ENCODE measurements at regions of chr4 and their contacts with region 1.

Region 1: GRCh38 chr4:37802068-37802666 is 24.3 kb upstream of the PGM2 start:
- DNase-seq: peak in 1 of 14 experiments; percentile 11
- ATAC-seq: no peak
- H3K4me3 ChIP-seq: no peak overlapping the region
- H3K4me3 Mint-ChIP-seq: no peak overlapping the region
- H3K27ac ChIP-seq: no peak overlapping the region
- H3K27ac Mint-ChIP-seq: no peak overlapping the region
- H3K4me1 ChIP-seq: no peaks in the 10 kb centered on the region
- H3K4me1 Mint-ChIP-seq: no peaks in the 10 kb centered on the region
- H3K27me3 ChIP-seq: no peaks in the 10 kb centered on the region
- H3K27me3 Mint-ChIP-seq: no peaks in the 10 kb centered on the region
- CTCF ChIP-seq: no peak

Region 2: DNA sequence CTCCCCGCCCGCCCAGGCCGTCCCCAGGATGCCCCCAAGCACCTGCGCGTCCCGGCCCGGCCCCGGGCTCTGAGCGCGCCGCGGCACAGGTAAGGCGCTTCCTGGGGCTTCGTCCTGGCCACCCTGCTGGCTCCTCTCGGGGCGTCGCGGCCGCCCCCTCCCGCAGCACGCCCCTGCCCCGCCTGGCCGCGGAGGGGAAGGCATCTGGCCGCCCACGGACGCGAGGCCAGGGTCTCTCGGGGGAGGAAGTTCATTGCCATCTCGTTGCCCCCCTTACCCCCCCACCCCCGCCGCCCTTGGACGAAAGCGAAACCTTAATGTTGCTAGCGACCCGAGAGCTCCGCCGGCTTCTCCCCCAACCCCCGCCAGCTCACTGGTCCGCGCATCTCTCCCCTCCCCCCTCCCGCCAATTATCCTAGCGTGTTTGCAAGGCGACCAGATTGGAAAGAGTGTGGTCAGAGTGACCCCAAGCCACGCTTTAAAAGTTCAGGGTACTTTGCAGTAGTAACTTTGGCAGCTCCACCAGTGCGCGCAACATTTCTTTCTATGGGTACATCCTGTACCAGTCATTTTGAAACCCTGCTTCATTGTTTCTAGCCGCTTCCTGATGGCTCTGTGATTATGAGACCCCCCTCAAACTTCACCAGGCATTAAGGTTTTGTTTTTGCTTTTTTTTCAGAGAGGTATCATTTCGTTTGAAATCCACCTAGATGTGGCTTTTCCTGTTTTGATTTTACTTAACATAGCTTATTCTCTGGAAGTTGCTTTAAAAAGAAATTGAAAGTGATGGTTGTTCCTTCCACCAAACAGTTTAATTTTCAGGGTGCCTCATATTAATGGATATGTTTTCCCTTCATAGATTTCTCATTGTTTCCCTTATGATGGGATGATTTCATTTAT is 89.3 kb after region 1 on chr4:
- CTCF ChIA-PET with region 1: no interaction called
- POLR2A ChIA-PET with region 1: no interaction called
- intact Hi-C with region 1: loop called in 1 of 2 experiments (anchors 5 kb)
- DNase-seq: peak in 13 of 14 experiments; percentile 13 to 76 (median 41)
- ATAC-seq: peak; percentile 63
- H3K4me3 ChIP-seq: peak overlapping the region; percentile 59
- H3K4me3 Mint-ChIP-seq: peak overlapping the region; percentile 97
- H3K27ac ChIP-seq: peak overlapping the region; percentile 20 to 66
- H3K27ac Mint-ChIP-seq: peak overlapping the region; percentile 94
- H3K4me1 ChIP-seq: peaks cover 40% of the 10 kb centered on the region
- H3K4me1 Mint-ChIP-seq: peaks cover 48% of the 10 kb centered on the region
- H3K27me3 ChIP-seq: no peaks in the 10 kb centered on the region
- H3K27me3 Mint-ChIP-seq: no peaks in the 10 kb centered on the region
- CTCF ChIP-seq: no peak

Region 3: DNA sequence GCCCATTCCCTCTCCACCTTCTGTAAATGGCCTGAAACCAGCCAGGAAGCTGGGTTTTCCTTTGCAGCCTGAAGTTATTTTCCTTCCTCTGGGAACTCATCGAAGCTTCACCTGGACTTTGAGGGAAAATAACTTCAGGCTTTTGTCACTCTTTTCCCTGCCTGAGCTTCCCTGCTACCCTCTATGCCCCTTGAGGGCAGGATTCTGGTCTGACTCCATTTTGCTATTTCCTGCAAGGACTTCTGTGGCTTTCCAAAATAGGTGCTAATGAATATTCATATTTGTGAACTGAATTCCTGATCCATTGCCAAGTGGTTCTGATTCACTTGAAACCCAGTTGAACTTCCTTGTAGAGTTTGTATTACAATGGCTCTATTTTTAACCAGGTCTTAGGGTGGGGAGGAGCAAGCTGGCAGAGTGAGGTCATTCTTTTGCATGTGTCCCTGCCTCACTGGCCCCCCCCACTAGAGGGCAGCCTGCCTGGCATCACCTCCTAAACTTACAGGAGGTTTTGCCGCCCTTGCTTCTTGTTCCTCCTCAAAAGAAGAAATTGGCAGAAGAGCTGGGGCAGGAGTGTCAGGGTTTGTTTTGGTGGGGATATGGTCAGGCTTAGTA is 168.4 kb after region 1 on chr4:
- CTCF ChIA-PET with region 1: no interaction called
- POLR2A ChIA-PET with region 1: no interaction called
- intact Hi-C with region 1: loop called in 1 of 2 experiments (anchors 2 kb)
- DNase-seq: peak in 13 of 14 experiments; percentile 19 to 79 (median 44)
- ATAC-seq: peak; percentile 91
- H3K4me3 ChIP-seq: no peak overlapping the region
- H3K4me3 Mint-ChIP-seq: no peak overlapping the region
- H3K27ac ChIP-seq: no peak overlapping the region
- H3K27ac Mint-ChIP-seq: no peak overlapping the region
- H3K4me1 ChIP-seq: no peaks in the 10 kb centered on the region
- H3K4me1 Mint-ChIP-seq: peaks cover 23% of the 10 kb centered on the region
- H3K27me3 ChIP-seq: no peaks in the 10 kb centered on the region
- H3K27me3 Mint-ChIP-seq: no peaks in the 10 kb centered on the region
- CTCF ChIP-seq: no peak

Region 4: GRCh38 chr4:38034986-38035882 is 233.1 kb after region 1 on chr4:
- CTCF ChIA-PET with region 1: interaction called, 8 read pairs
- POLR2A ChIA-PET with region 1: no interaction called
- intact Hi-C with region 1: loop called (anchors 1 kb)
- DNase-seq: peak in 6 of 14 experiments; percentile 9 to 75 (median 62)
- ATAC-seq: peak; percentile 54
- H3K4me3 ChIP-seq: no peak overlapping the region
- H3K4me3 Mint-ChIP-seq: no peak overlapping the region
- H3K27ac ChIP-seq: no peak overlapping the region
- H3K27ac Mint-ChIP-seq: no peak overlapping the region
- H3K4me1 ChIP-seq: no peaks in the 10 kb centered on the region
- H3K4me1 Mint-ChIP-seq: no peaks in the 10 kb centered on the region
- H3K27me3 ChIP-seq: no peaks in the 10 kb centered on the region
- H3K27me3 Mint-ChIP-seq: no peaks in the 10 kb centered on the region
- CTCF ChIP-seq: peak; percentile 79